Activated T-helper 2 cell treated with anti-CD3 and anti-CD28 coated beads, Interferon-gamma antibody, Interleukin-2, Interleukin-4, amounts not matched to agents 10 μg/mL and 5 μg/mL and 100 μg/mL, durations not matched to agents 14 hours and 24 hours and 36 hours (primary cell): ENCODE measurements at regions of chr15 and their contacts with region 1.

Region 1: GRCh38 chr15:70097337-70098169 is at the start of gene TLE3:
- DNase-seq: peak; percentile 97
- H3K4me3 Mint-ChIP-seq: peak within 1 kb of the TSS; percentile 99
- H3K27ac Mint-ChIP-seq: peak within 1 kb of the TSS; percentile 97
- H3K4me1 Mint-ChIP-seq: peaks cover 40% of the 10 kb centered on the region
- H3K27me3 Mint-ChIP-seq: peaks cover 18% of the 10 kb centered on the region
- total RNA-seq, gene TLE3: 94.6 and 102 TPM in 2 replicates

Region 2: DNA sequence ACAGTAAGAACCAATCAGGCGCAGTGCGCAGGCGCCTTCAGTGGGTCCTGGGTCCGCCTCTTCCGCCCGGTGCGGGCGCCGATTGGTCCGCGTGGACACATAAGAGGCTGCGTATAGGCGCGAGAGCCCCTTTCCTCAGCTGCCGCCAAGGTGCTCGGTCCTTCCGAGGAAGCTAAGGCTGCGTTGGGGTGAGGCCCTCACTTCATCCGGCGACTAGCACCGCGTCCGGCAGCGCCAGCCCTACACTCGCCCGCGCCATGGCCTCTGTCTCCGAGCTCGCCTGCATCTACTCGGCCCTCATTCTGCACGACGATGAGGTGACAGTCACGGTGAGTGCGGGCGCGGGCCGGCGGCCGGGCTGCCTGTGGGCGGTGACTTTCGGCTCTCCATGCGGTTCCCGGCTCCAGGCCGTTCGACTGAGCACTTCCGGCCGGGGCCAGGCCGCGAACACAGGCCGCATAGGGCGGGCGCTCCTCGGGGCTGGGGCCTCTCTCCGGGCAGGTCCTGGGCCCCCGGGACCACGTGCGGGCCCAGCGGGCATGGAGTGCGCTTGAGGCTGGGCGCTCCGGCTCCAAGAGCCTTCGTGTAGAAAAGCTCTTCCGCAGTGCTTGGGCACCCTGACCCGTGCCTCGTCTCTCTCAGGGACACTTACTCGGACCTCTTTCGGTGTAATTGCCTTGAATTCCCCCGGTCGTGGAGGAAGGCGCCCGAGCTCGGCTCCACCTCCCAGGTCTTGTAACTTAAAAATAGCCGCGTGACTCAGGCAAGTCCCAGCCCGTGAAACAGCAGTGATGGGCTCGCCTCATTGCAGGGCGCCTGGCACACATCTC is 644.6 kb before region 1 on chr15 and contains the start of gene RPLP1:
- intact Hi-C with region 1: loop called (anchors 5 kb)
- DNase-seq: peak; percentile 94
- H3K4me3 Mint-ChIP-seq: peak within 1 kb of the TSS; percentile 99
- H3K27ac Mint-ChIP-seq: peak within 1 kb of the TSS; percentile 99
- H3K4me1 Mint-ChIP-seq: peaks cover 28% of the 10 kb centered on the region
- H3K27me3 Mint-ChIP-seq: no peaks in the 10 kb centered on the region
- total RNA-seq, gene RPLP1: 1,844 and 1,891 TPM in 2 replicates

Region 3: GRCh38 chr15:69576035-69576526 is 521.5 kb before region 1 on chr15:
- intact Hi-C with region 1: loop called (anchors 1 kb)
- DNase-seq: peak; percentile 38
- H3K4me3 Mint-ChIP-seq: no peak overlapping the region
- H3K27ac Mint-ChIP-seq: no peak overlapping the region
- H3K4me1 Mint-ChIP-seq: peaks cover 29% of the 10 kb centered on the region
- H3K27me3 Mint-ChIP-seq: peaks cover 10% of the 10 kb centered on the region

Region 4: GRCh38 chr15:69760890-69761568 is 336.5 kb before region 1 on chr15:
- intact Hi-C with region 1: loop called (anchors 1 kb)
- DNase-seq: peak; percentile 85
- H3K4me3 Mint-ChIP-seq: peak overlapping the region; percentile 37
- H3K27ac Mint-ChIP-seq: peak overlapping the region; percentile 92
- H3K4me1 Mint-ChIP-seq: peaks cover 65% of the 10 kb centered on the region
- H3K27me3 Mint-ChIP-seq: peaks cover 6% of the 10 kb centered on the region

Region 5: DNA sequence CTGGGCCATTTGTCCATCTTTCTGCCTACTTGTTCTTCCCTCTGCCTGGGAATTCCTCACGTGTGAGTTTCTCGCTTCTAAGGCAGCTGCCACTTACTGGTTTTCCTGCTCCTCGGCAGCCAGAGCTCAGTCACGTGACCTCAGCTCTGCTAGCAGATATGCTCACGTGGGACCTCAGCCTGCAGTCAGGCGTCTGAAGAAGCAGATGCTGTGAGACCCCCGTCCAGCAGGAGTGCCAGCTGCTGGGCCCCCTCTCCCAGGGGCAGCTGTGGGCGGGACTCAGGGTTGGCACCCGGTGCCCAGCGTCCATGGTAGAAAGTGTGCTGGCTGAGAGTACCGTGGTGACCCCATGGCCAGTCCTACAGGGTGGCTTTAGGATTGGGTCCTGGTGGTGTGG is 161.5 kb after region 1 on chr15:
- intact Hi-C with region 1: loop called (anchors 5 kb)
- DNase-seq: peak; percentile 37
- H3K4me3 Mint-ChIP-seq: no peak overlapping the region
- H3K27ac Mint-ChIP-seq: no peak overlapping the region
- H3K4me1 Mint-ChIP-seq: peaks cover 35% of the 10 kb centered on the region
- H3K27me3 Mint-ChIP-seq: peaks cover 46% of the 10 kb centered on the region

Region 6: GRCh38 chr15:70376929-70377691 is 279.6 kb after region 1 on chr15:
- intact Hi-C with region 1: no loop called
- DNase-seq: no peak
- H3K4me3 Mint-ChIP-seq: no peak overlapping the region
- H3K27ac Mint-ChIP-seq: no peak overlapping the region
- H3K4me1 Mint-ChIP-seq: no peaks in the 10 kb centered on the region
- H3K27me3 Mint-ChIP-seq: peaks cover 27% of the 10 kb centered on the region